Naive thymus-derived CD4-positive, alpha-beta T cell (primary cell): ENCODE measurements at regions of chr2 and their contacts with region 1.

Region 1: DNA sequence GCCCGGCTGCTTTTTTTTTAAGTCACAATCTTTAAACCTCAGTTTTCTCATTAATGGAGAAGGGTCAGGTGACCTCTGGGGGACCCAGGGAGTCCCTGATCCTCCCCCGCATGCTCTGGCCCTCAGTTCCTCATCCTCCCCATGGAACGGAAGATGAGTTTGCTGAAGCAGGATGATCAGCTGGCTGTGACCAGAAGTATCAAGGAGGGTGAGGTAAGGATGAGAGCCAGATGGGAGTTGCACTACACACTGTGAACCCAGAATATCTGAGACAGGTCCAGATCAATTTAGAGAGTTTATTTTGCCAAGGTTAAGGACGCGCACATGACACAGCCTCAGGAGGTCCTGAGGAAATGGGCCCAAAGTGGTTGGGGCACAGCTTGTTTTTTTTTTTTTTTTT is 3.8 kb downstream of the CATIP start:
- DNase-seq: no peak
- ATAC-seq: peak; percentile 68
- H3K4me3 ChIP-seq: no peak overlapping the region
- H3K4me3 Mint-ChIP-seq: no peak overlapping the region
- H3K27ac ChIP-seq: no peak overlapping the region
- H3K27ac Mint-ChIP-seq: no peak overlapping the region
- H3K4me1 ChIP-seq: no peaks in the 10 kb centered on the region
- H3K4me1 Mint-ChIP-seq: peaks cover 0 to 6% (median under 1%) of the 10 kb centered on the region in 7 donors
- H3K27me3 ChIP-seq: no peaks in the 10 kb centered on the region
- H3K27me3 Mint-ChIP-seq: peaks cover 0 to 6% (median 0%) of the 10 kb centered on the region in 5 donors

Region 2: GRCh38 chr2:218286570-218287459 is 73.6 kb before region 1 on chr2:
- CTCF ChIA-PET with region 1: interaction called, 67 read pairs
- POLR2A ChIA-PET with region 1: interaction called, 5 read pairs
- intact Hi-C with region 1: loop called in 1 of 2 experiments (anchors 1 kb)
- DNase-seq: peak; percentile 53 to 90 (median 78)
- ATAC-seq: peak; percentile 87
- H3K4me3 ChIP-seq: peak overlapping the region; percentile 66
- H3K4me3 Mint-ChIP-seq: peak overlapping the region; percentile 85 to 97 (median 94)
- H3K27ac ChIP-seq: peak overlapping the region; percentile 93
- H3K27ac Mint-ChIP-seq: peak overlapping the region; percentile 95 to 99 (median 99)
- H3K4me1 ChIP-seq: peaks cover 74 to 77% of the 10 kb centered on the region in 2 donors
- H3K4me1 Mint-ChIP-seq: peaks cover 53 to 87% (median 76%) of the 10 kb centered on the region in 7 donors
- H3K27me3 ChIP-seq: no peaks in the 10 kb centered on the region
- H3K27me3 Mint-ChIP-seq: no peaks in the 10 kb centered on the region

Region 3: DNA sequence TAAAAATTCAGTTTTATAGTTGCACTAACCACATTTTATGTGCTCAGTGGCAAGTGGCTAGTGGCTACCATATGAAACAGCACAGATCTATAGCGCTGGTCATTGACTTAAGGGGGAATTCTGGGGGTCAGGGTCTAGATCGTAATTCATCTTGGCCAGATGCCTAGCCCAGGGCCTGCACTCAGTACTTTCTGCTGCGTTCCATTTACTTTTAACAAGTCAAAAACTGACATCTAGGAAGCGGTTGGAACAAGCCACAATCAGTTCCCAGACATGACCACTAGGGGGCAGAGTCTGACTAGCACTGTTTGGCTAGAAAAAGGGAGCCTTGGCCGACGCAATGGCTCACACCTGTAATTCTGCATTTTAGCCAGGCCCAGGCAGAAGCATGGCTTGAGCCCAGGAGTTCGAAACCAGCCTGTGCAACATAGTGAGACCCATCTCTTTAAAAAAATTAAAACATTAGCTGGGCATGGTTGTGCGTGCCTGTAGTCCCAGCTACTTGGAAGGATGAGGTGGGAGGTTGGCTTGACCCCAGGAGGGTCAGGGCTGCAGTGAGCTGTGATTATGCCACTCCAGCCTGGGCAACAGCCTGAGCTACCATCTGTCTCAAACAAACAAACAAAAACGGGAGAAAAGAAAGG is 59.1 kb before region 1 on chr2:
- CTCF ChIA-PET with region 1: interaction called, 93 read pairs
- POLR2A ChIA-PET with region 1: interaction called, 14 read pairs
- intact Hi-C with region 1: loop called (anchors 1 kb)
- DNase-seq: peak; percentile 61 to 92 (median 84)
- ATAC-seq: peak; percentile 99
- H3K4me3 ChIP-seq: no peak overlapping the region
- H3K4me3 Mint-ChIP-seq: no peak overlapping the region
- H3K27ac ChIP-seq: no peak overlapping the region
- H3K27ac Mint-ChIP-seq: peak overlapping the region in 8 of 9 donors; percentile 34 to 80 (median 64)
- H3K4me1 ChIP-seq: no peaks in the 10 kb centered on the region
- H3K4me1 Mint-ChIP-seq: peaks cover 3 to 8% (median 7%) of the 10 kb centered on the region in 7 donors
- H3K27me3 ChIP-seq: no peaks in the 10 kb centered on the region
- H3K27me3 Mint-ChIP-seq: peaks cover 0 to 4% (median 0%) of the 10 kb centered on the region in 5 donors

Region 4: GRCh38 chr2:218322895-218323808 is 37.3 kb before region 1 on chr2:
- CTCF ChIA-PET with region 1: interaction called, 7 read pairs
- POLR2A ChIA-PET with region 1: interaction called, 3 read pairs
- intact Hi-C with region 1: loop called in 1 of 2 experiments (anchors 5 kb)
- DNase-seq: peak; percentile 15 to 61 (median 44)
- ATAC-seq: peak; percentile 73
- H3K4me3 ChIP-seq: peak overlapping the region; percentile 64
- H3K4me3 Mint-ChIP-seq: peak overlapping the region; percentile 84 to 93 (median 88)
- H3K27ac ChIP-seq: peak overlapping the region; percentile 69
- H3K27ac Mint-ChIP-seq: peak overlapping the region in 8 of 9 donors; percentile 58 to 93 (median 84)
- H3K4me1 ChIP-seq: peaks cover 10 to 50% of the 10 kb centered on the region in 2 donors
- H3K4me1 Mint-ChIP-seq: peaks cover 25 to 78% (median 71%) of the 10 kb centered on the region in 7 donors
- H3K27me3 ChIP-seq: no peaks in the 10 kb centered on the region
- H3K27me3 Mint-ChIP-seq: peaks cover 0 to 31% (median 0%) of the 10 kb centered on the region in 5 donors